Activated CD8-positive, alpha-beta T cell treated with anti-CD3 and anti-CD28 coated beads, Interleukin-2, amount 10 ng/mL, durations not matched to agents 7 days and 5 days (primary cell): ENCODE measurements at regions of chr1 and their contacts with region 1.

Region 1: GRCh38 chr1:145845514-145846161 is at the start of gene NUDT17:
- DNase-seq: peak; percentile 85
- ATAC-seq: peak; percentile 88
- H3K4me3 Mint-ChIP-seq: no peak within 1 kb of the TSS
- H3K27ac Mint-ChIP-seq: peak within 1 kb of the TSS; percentile 72
- H3K4me1 Mint-ChIP-seq: peaks cover 7% of the 10 kb centered on the region
- H3K27me3 Mint-ChIP-seq: no peaks in the 10 kb centered on the region
- total RNA-seq, gene NUDT17: 2.2 to 3.8 TPM

Region 2: GRCh38 chr1:145695821-145696629 is 149.6 kb before region 1 on chr1:
- CTCF ChIA-PET with region 1: no interaction called
- POLR2A ChIA-PET with region 1: no interaction called
- DNase-seq: no peak
- ATAC-seq: no peak
- H3K4me3 Mint-ChIP-seq: no peak overlapping the region
- H3K27ac Mint-ChIP-seq: no peak overlapping the region
- H3K4me1 Mint-ChIP-seq: peaks cover 14% of the 10 kb centered on the region
- H3K27me3 Mint-ChIP-seq: peaks cover 8% of the 10 kb centered on the region

Region 3: GRCh38 chr1:145765574-145765973 is 80.1 kb before region 1 on chr1:
- CTCF ChIA-PET with region 1: no interaction called
- POLR2A ChIA-PET with region 1: no interaction called
- DNase-seq: no peak
- ATAC-seq: no peak
- H3K4me3 Mint-ChIP-seq: no peak overlapping the region
- H3K27ac Mint-ChIP-seq: no peak overlapping the region
- H3K4me1 Mint-ChIP-seq: no peaks in the 10 kb centered on the region
- H3K27me3 Mint-ChIP-seq: no peaks in the 10 kb centered on the region

Region 4: GRCh38 chr1:145858894-145859490 is 13.4 kb after region 1 on chr1 and contains the start of gene PIAS3:
- CTCF ChIA-PET with region 1: interaction called, 271 read pairs
- POLR2A ChIA-PET with region 1: interaction called, 38 read pairs
- DNase-seq: peak; percentile 91
- ATAC-seq: peak; percentile 86
- H3K4me3 Mint-ChIP-seq: peak within 1 kb of the TSS; percentile 95
- H3K27ac Mint-ChIP-seq: peak within 1 kb of the TSS; percentile 87
- H3K4me1 Mint-ChIP-seq: peaks cover 21% of the 10 kb centered on the region
- H3K27me3 Mint-ChIP-seq: peaks cover 11% of the 10 kb centered on the region
- total RNA-seq, gene PIAS3: 19.8 to 23.7 TPM

Region 5: GRCh38 chr1:145885738-145886287 is 40.2 kb after region 1 on chr1 and contains the start of gene ANKRD35:
- CTCF ChIA-PET with region 1: interaction called, 49 read pairs
- POLR2A ChIA-PET with region 1: no interaction called
- DNase-seq: peak; percentile 94
- ATAC-seq: peak; percentile 100
- H3K4me3 Mint-ChIP-seq: peak within 1 kb of the TSS; percentile 81
- H3K27ac Mint-ChIP-seq: no peak within 1 kb of the TSS
- H3K4me1 Mint-ChIP-seq: peaks cover 14% of the 10 kb centered on the region
- H3K27me3 Mint-ChIP-seq: peaks cover 31% of the 10 kb centered on the region
- total RNA-seq, gene ANKRD35: 0.76 to 1.1 TPM

Region 6: GRCh38 chr1:145912128-145912641 is 66.5 kb after region 1 on chr1:
- CTCF ChIA-PET with region 1: interaction called, 46 read pairs
- POLR2A ChIA-PET with region 1: interaction called, 8 read pairs
- DNase-seq: no peak
- ATAC-seq: no peak
- H3K4me3 Mint-ChIP-seq: no peak overlapping the region
- H3K27ac Mint-ChIP-seq: no peak overlapping the region
- H3K4me1 Mint-ChIP-seq: peaks cover 14% of the 10 kb centered on the region
- H3K27me3 Mint-ChIP-seq: no peaks in the 10 kb centered on the region

Region 7: DNA sequence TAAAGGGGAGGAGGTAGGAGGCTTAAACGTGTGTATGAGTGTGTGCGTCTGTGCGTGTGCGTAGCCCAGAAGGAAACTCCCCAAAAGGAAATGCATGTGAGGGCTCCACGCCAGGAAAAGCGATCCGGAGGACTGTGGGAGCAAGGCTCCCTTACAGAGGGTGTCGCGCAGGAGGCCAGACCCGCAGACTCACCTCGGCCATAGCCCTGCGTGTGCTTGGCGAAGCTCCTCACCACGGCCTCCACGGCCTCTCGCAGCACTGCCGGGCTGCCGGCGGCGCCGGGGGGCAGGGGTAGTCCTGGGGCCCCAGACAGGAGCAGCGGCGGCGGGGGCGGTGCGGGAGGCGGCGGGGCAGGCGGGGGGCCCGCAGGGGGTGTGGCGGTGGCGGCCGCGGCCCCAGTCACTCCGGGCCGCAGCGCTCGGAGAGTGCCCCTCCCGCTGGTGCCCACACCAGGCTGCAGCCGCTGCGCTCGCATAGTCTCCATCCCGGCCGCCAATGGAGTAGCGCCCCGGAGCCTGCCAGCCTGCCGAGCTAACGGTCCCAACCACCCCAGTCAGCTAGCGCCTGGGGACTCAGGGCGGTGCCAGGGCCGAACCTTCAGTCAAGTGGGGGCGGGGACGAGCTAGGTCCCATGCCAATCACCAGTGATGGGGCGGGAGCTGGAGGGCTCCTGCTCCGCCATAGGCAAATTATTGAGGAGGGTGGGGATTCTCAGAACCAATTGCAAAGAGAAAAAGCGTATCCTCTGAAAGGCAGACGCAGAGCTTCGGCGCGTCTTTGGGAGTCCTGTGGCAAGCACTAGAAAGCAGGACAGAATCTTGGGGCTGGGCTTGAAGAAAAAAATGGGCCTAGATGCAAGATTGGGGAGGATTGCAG is 112.0 kb after region 1 on chr1 and contains the start of gene LIX1L:
- CTCF ChIA-PET with region 1: interaction called, 52 read pairs
- POLR2A ChIA-PET with region 1: no interaction called
- DNase-seq: peak; percentile 98
- ATAC-seq: peak; percentile 93
- H3K4me3 Mint-ChIP-seq: peak within 1 kb of the TSS; percentile 85
- H3K27ac Mint-ChIP-seq: peak within 1 kb of the TSS; percentile 84
- H3K4me1 Mint-ChIP-seq: peaks cover 62% of the 10 kb centered on the region
- H3K27me3 Mint-ChIP-seq: no peaks in the 10 kb centered on the region
- total RNA-seq, gene LIX1L: 45.8 to 48.4 TPM

Region 8: DNA sequence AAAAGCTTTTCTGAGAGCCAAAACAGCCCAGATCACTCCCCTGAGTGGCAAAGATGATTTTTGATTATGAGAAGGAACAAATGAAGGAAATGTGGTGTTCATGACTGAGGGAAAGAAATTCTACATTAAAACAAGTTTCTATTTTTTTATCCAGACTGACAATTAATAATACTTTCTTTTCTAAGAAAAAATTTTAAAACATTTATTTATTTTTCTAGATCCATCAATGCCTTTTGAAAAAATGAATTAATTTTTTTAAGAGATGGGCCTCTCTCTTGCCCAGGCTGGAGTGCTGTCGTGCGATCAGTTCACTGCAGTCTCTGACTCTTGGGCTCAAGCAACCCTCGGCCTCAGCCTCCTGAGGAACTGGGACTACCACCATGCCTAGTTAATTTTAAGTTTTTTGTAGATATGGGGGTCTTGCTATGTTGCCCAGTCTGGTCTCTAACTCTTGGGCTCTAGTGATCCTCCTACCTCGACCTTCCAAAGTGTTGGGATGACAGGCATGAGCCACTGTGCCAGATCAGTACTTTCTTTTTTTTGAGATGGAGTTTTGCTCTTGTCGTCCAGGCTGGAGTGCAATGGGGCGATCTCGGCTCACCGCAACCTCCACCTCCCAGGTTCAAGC is 162.0 kb after region 1 on chr1:
- CTCF ChIA-PET with region 1: interaction called, 55 read pairs
- POLR2A ChIA-PET with region 1: no interaction called
- DNase-seq: no peak
- ATAC-seq: no peak
- H3K4me3 Mint-ChIP-seq: peak overlapping the region; percentile 69
- H3K27ac Mint-ChIP-seq: peak overlapping the region; percentile 91
- H3K4me1 Mint-ChIP-seq: peaks cover 39% of the 10 kb centered on the region
- H3K27me3 Mint-ChIP-seq: no peaks in the 10 kb centered on the region

Region 9: DNA sequence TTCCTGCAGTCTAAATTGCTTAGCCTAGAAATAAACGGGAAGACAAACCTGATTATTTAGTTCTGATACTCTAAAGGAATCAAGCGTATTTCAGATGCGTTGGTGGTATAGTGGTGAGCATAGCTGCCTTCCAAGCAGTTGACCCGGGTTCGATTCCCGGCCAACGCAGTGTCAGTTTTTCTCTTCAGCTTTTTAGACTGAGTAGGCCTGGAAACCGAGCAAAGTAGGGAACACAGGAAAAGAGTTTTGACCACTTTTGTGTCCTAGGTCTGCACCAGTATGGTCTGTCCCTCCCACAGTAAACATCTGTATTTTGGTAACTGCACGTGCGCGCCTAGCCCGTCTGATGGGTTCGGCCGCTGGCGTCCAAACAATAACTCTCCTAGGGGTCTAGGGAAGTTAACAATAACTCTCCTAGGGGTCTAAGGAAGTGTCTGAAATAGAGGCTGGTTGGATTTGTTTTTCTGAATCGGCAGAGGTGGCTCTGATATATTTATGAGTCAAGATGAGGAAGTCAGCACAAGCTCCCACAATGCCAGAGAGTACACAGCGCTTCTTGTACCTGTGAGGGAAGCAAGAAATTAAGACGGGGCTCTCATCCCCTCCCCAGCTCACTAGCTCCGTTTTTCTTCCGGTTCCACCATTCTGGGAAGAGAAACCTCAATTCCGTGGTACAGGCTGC is 191.5 kb after region 1 on chr1:
- CTCF ChIA-PET with region 1: interaction called, 20 read pairs
- POLR2A ChIA-PET with region 1: interaction called, 3 read pairs
- DNase-seq: peak; percentile 88
- ATAC-seq: peak; percentile 52
- H3K4me3 Mint-ChIP-seq: peak overlapping the region; percentile 91
- H3K27ac Mint-ChIP-seq: peak overlapping the region; percentile 95
- H3K4me1 Mint-ChIP-seq: peaks cover 48% of the 10 kb centered on the region
- H3K27me3 Mint-ChIP-seq: peaks cover 6% of the 10 kb centered on the region